ENCODE measurements at regions of chrX and their contacts with region 1.

Region 1: GRCh38 chrX:78517124-78517523 is 142.0 kb downstream of the RTL3 start:
- DNase-seq: peak; percentile 88
- H3K4me3 Mint-ChIP-seq: peak overlapping the region; percentile 39
- H3K27ac Mint-ChIP-seq: peak overlapping the region; percentile 93
- H3K4me1 Mint-ChIP-seq: peaks cover 40% of the 10 kb centered on the region
- H3K27me3 Mint-ChIP-seq: no peaks in the 10 kb centered on the region

Region 2: DNA sequence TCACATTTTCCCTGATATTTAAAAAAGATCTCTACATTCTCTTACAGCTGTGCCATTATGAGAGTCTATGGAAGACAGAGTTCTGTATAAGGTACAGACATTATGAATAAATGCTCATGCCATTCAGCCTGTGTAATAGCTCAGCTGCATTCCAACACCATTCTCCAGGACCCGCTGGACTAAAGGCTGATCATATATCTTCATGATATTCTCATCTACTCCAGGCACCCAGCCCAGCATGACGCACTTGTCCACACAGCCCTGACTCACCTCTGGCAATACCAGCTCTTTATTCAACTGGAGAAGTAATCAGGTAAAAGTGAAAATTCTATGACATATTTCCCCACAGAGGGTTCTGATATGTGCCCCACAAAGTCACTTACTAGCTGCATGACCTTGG is 1507.4 kb before region 1 on chrX:
- intact Hi-C with region 1: loop called (anchors 10 kb)
- DNase-seq: no peak
- H3K4me3 Mint-ChIP-seq: no peak overlapping the region
- H3K27ac Mint-ChIP-seq: no peak overlapping the region
- H3K4me1 Mint-ChIP-seq: peaks cover 5% of the 10 kb centered on the region
- H3K27me3 Mint-ChIP-seq: no peaks in the 10 kb centered on the region

Region 3: DNA sequence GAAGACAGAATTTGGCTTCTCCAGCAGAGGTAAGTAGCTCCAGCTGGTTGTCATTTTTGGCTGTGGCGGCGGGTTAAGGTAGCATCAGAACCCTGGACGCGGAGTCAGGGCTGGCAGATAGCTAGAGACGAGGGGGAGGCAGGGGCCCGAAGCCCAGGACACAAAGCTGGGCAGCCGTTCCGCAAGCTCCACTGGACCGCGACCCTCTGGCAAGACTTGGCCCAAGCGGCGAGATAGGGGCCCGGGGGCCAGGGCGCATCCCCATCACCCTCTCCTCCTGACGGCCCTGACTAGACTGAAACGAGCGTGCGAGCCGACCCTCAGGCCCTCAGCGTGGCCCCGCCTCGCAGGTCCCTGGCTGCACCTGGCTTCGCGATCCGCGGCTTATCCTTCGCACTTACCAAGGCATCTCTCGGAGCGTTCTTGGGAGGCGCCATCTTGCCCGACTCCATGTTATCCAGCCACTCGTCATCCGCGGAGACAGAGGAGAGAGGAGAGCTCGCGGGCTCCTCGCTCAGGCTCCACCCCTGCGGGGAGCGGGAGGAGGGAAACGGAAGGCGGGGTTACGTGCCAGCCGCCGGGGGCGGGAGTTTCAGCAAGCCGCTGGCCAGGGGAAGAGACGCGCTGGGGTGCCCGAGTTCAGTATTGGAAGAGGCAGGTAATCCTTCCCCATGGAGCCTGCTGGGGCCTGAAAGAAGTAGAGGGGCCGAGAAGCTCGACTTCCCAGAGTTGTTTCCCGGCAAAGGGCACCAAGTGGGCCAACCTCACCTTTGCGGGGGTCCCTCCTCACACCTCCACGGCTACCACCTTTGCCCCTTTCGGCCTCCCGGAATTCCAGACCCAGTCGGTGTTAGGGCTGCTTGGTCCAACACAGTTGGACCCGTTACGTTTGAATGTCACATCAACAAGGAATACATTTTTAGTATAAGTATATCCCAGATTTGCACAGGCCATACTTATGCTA is 377.7 kb before region 1 on chrX and contains the start of gene TAF9B:
- intact Hi-C with region 1: loop called (anchors 5 kb)
- DNase-seq: peak; percentile 95
- H3K4me3 Mint-ChIP-seq: peak within 1 kb of the TSS; percentile 92
- H3K27ac Mint-ChIP-seq: peak within 1 kb of the TSS; percentile 95
- H3K4me1 Mint-ChIP-seq: peaks cover 6% of the 10 kb centered on the region
- H3K27me3 Mint-ChIP-seq: no peaks in the 10 kb centered on the region
- total RNA-seq, gene TAF9B: 14.6 and 16.1 TPM in 2 replicates

Region 4: GRCh38 chrX:78375894-78376293 is 141.2 kb before region 1 on chrX:
- intact Hi-C with region 1: loop called (anchors 1 kb)
- DNase-seq: peak; percentile 58
- H3K4me3 Mint-ChIP-seq: no peak overlapping the region
- H3K27ac Mint-ChIP-seq: peak overlapping the region; percentile 58
- H3K4me1 Mint-ChIP-seq: peaks cover 23% of the 10 kb centered on the region
- H3K27me3 Mint-ChIP-seq: no peaks in the 10 kb centered on the region

Region 5: DNA sequence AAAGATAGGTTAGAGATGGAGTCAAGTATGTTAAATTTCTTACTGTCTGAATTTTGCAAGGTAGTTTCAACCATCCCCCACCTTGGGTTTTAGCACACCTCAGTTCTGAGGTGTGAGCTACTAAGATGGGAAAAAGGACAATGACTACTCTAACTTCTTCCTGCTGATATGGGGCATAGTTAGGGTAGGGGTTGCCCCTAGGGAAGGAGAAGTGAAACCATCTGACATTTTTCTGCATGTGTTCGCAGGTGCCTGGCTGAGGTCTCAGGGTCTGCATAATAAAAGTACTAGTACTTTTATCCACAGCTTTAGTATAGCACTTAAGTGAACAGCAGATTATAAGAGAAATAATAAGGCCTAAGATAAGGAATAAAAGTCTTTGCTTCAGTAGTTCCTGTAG is 60.2 kb before region 1 on chrX:
- intact Hi-C with region 1: no loop called
- DNase-seq: no peak
- H3K4me3 Mint-ChIP-seq: no peak overlapping the region
- H3K27ac Mint-ChIP-seq: no peak overlapping the region
- H3K4me1 Mint-ChIP-seq: no peaks in the 10 kb centered on the region
- H3K27me3 Mint-ChIP-seq: no peaks in the 10 kb centered on the region

Region 6: DNA sequence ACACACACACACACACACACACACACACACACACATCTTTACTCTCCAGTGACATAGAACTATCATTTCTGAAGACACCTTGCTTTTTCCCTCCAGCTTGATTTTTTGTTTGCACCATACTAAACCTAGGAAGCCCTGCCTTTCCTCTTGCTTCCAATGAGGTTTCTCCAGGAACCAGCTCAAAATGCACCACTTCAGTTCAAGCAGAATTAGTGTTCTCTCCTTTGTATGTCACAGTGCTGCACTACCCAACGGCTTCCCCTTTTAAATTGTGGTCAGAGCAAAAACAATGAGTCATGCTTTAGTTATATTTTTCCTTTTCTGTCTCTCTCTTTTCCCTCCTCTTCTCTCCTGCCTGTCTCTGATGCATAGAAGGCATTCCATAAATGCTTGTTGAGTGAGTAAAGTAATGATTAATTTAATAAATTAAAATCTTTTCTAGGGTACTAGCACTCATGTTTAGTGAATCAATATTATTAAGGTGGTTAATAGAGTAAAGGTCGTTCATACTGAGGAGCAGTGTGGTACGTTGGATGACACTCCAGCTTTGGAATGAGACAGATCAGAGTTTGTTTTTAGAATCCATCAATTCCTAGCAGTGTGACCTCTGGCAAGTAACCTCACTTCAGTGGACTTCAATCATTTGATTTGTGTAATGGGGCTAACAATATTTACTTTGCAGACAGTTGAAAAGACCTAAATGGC is 136.1 kb after region 1 on chrX:
- intact Hi-C with region 1: loop called (anchors 5 kb)
- DNase-seq: peak; percentile 63
- H3K4me3 Mint-ChIP-seq: peak overlapping the region; percentile 76
- H3K27ac Mint-ChIP-seq: peak overlapping the region; percentile 79
- H3K4me1 Mint-ChIP-seq: peaks cover 19% of the 10 kb centered on the region
- H3K27me3 Mint-ChIP-seq: no peaks in the 10 kb centered on the region

Region 7: DNA sequence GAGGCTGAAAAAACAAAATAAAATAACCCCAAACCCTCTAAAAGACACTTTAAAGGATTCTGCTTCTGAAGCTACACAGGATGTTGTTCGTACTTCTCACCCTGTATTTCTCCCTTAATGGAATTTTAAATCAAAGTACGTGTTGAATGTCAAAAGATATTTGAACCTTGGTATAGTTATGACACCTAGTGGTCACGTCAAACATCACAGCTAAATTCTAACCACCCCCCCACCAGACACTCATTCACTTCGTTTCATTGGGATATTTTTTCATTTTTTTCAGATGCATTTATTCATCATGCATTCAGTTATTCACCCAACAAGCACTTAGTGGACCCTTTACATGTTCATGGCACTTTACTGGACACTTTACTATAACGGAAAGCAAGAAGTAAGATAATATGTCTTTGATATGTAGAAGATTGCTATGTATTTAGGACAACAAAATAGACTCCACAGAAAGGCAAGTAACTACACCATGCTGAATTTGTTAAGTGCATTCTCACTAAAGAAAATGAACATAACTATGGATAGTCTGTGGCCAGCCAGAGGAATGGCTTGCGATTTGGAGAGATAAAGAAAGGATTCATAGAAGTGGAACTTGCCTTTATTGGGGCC is 564.9 kb after region 1 on chrX:
- intact Hi-C with region 1: loop called (anchors 10 kb)
- DNase-seq: peak; percentile 78
- H3K4me3 Mint-ChIP-seq: peak overlapping the region; percentile 78
- H3K27ac Mint-ChIP-seq: peak overlapping the region; percentile 87
- H3K4me1 Mint-ChIP-seq: peaks cover 14% of the 10 kb centered on the region
- H3K27me3 Mint-ChIP-seq: no peaks in the 10 kb centered on the region

Region 8: DNA sequence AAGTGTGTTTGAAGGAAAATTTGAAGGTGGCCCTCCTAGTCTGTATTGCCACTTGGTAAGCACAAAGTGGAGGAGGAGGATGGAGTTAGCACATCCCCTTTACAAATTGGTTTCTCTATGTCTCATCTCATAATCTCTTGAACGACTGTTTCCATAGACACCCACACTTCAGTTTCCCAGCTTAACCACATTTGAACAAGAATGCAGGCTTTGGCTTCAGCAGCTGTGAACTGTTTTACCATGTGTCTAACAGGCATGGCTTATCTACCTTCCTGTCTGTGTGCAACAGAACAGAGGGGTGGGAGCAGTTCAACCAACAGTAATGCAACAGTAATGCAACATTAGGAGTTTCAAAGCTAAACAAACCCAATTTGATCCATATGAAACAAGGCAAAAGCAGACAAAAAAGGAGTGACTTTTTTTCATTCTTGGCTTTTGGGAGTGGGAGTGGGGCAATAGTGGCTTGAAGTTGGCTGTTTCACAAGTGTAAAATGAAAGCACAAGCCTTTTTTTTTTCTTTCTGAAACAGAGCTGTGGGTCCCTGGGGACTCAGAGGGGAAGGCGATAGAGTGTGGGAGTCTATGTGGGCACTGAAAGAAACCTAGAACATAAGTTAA is 742.1 kb after region 1 on chrX:
- intact Hi-C with region 1: loop called (anchors 1 kb)
- DNase-seq: peak; percentile 89
- H3K4me3 Mint-ChIP-seq: peak overlapping the region; percentile 75
- H3K27ac Mint-ChIP-seq: peak overlapping the region; percentile 93
- H3K4me1 Mint-ChIP-seq: peaks cover 52% of the 10 kb centered on the region
- H3K27me3 Mint-ChIP-seq: no peaks in the 10 kb centered on the region

Measured in activated CD4-positive, alpha-beta T cell treated with anti-CD3 and anti-CD28 coated beads, Interleukin-2, amount 10 ng/mL, durations not matched to agents 24 days and 14 days (primary cell).